Lower lobe of right lung (tissue), 2 donors: ENCODE measurements at regions of chr7 and their contacts with region 1.

Region 1: GRCh38 chr7:140003913-140004382 is 58.8 kb downstream of the PARP12 start:
- DNase-seq: no peak
- ATAC-seq: no peak
- H3K4me3 ChIP-seq: no peak overlapping the region
- H3K27ac ChIP-seq: no peak overlapping the region
- H3K4me1 ChIP-seq: no peaks in the 10 kb centered on the region
- H3K27me3 ChIP-seq: no peaks in the 10 kb centered on the region
- CTCF ChIP-seq: peak; percentile 51

Region 2: GRCh38 chr7:139618482-139619366 is 385.2 kb before region 1 on chr7:
- intact Hi-C with region 1: loop called (anchors 10 kb)
- DNase-seq: no peak
- ATAC-seq: peak in 1 of 2 donors; percentile 38
- H3K4me3 ChIP-seq: no peak overlapping the region
- H3K27ac ChIP-seq: no peak overlapping the region
- H3K4me1 ChIP-seq: no peaks in the 10 kb centered on the region
- H3K27me3 ChIP-seq: no peaks in the 10 kb centered on the region
- CTCF ChIP-seq: peak; percentile 46

Region 3: DNA sequence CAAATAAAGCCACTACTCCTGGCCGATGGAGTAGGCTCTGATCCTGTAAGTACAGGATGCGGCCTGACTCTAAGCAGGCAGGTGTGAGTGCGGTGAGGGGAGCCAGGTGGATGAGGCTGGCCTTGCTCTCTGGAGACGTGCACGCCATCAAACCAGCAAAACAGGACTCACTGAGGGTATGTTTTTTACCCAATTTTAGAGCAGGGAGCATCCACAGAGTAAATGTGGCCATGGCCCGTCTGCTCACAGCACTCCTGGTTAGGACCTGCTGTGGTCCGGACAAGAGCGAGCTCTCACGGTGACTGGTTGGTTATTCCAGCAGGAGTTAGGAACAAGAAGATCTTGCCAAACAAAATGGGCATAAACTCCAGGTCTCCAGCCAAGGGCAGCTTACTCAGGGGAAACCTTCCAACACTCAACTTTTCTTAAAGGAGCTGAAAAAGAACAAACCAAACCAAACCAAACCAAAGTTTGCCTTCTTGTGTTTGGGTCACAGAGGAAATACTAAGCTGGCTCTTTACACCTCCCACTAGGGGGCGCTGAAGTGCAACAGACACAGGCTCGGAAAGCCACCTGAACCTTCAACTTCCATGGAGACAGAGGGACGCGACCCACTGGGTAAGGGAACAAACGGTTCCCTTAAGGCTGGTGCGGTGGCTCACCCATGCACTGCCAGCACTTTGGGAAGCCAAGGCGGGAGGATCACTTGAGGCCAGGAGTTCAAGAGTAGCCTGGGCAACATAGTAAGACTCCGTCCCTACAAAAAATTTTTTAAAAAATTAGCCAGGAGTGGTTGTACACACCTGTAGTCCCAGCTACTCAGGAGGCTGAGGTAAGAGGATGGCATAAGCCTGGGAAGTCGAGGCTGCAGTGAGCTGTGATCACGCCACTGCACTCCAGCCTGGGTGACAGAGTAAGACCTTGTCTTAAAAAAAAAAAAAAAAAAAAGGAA is 358.1 kb before region 1 on chr7:
- intact Hi-C with region 1: loop called (anchors 10 kb)
- DNase-seq: peak; percentile 77
- ATAC-seq: peak; percentile 79 to 81
- H3K4me3 ChIP-seq: no peak overlapping the region
- H3K27ac ChIP-seq: no peak overlapping the region
- H3K4me1 ChIP-seq: peaks cover 50% of the 10 kb centered on the region
- H3K27me3 ChIP-seq: no peaks in the 10 kb centered on the region
- CTCF ChIP-seq: peak; percentile 91

Region 4: GRCh38 chr7:139777948-139778841 is 225.8 kb before region 1 on chr7 and contains the start of gene HIPK2:
- intact Hi-C with region 1: loop called (anchors 10 kb)
- DNase-seq: peak; percentile 88
- ATAC-seq: peak; percentile 87 to 90
- H3K4me3 ChIP-seq: peak within 1 kb of the TSS; percentile 85
- H3K27ac ChIP-seq: peak within 1 kb of the TSS; percentile 93
- H3K4me1 ChIP-seq: peaks cover 31% of the 10 kb centered on the region
- H3K27me3 ChIP-seq: no peaks in the 10 kb centered on the region
- CTCF ChIP-seq: no peak
- total RNA-seq, gene HIPK2: 81.0 TPM